ENCODE measurements at regions of chr17 and their contacts with region 1.

Region 1: GRCh38 chr17:55770148-55770870 is 19.5 kb downstream of the PCTP start:
- DNase-seq: no peak
- H3K4me3 Mint-ChIP-seq: no peak overlapping the region
- H3K27ac Mint-ChIP-seq: no peak overlapping the region
- H3K4me1 Mint-ChIP-seq: peaks cover 10% of the 10 kb centered on the region
- H3K27me3 Mint-ChIP-seq: no peaks in the 10 kb centered on the region
- CTCF ChIP-seq: peak; percentile 32

Region 2: DNA sequence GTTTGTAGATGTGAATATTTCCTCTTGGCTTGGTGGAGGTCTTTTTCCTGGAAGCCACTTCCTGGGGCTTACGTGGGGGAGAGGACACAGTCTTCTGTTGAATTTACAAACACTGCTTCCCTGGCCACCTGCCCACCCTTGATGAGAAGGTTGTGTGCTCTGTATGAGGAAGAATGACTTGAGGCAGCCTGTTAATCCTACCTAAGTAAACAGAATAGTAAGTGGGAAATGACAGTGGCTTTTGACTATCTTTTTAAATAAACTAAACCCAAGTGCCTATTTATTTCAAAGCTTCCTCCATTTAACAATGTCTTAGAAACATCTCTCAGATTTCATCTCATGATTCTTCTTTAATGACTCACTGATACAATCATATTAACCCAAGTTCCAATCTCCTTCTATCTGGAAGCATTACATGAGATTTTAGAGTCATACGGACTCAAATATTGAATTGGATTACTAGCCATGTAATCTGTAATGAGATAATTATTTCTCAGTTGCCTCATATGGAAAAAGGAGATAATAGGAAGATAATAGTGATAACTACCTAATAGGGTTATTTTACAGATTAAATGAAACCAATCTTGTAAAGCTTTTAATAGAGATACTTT is 162.5 kb before region 1 on chr17:
- CTCF ChIA-PET with region 1: interaction called, 3 read pairs
- intact Hi-C with region 1: loop called (anchors 2 kb)
- DNase-seq: peak; percentile 37
- H3K4me3 Mint-ChIP-seq: no peak overlapping the region
- H3K27ac Mint-ChIP-seq: no peak overlapping the region
- H3K4me1 Mint-ChIP-seq: no peaks in the 10 kb centered on the region
- H3K27me3 Mint-ChIP-seq: no peaks in the 10 kb centered on the region
- CTCF ChIP-seq: no peak

Region 3: GRCh38 chr17:55717898-55718735 is 52.2 kb before region 1 on chr17:
- CTCF ChIA-PET with region 1: no interaction called
- intact Hi-C with region 1: loop called (anchors 5 kb)
- DNase-seq: peak; percentile 76
- H3K4me3 Mint-ChIP-seq: no peak overlapping the region
- H3K27ac Mint-ChIP-seq: no peak overlapping the region
- H3K4me1 Mint-ChIP-seq: peaks cover 9% of the 10 kb centered on the region
- H3K27me3 Mint-ChIP-seq: peaks cover 9% of the 10 kb centered on the region
- CTCF ChIP-seq: peak; percentile 39

Region 4: DNA sequence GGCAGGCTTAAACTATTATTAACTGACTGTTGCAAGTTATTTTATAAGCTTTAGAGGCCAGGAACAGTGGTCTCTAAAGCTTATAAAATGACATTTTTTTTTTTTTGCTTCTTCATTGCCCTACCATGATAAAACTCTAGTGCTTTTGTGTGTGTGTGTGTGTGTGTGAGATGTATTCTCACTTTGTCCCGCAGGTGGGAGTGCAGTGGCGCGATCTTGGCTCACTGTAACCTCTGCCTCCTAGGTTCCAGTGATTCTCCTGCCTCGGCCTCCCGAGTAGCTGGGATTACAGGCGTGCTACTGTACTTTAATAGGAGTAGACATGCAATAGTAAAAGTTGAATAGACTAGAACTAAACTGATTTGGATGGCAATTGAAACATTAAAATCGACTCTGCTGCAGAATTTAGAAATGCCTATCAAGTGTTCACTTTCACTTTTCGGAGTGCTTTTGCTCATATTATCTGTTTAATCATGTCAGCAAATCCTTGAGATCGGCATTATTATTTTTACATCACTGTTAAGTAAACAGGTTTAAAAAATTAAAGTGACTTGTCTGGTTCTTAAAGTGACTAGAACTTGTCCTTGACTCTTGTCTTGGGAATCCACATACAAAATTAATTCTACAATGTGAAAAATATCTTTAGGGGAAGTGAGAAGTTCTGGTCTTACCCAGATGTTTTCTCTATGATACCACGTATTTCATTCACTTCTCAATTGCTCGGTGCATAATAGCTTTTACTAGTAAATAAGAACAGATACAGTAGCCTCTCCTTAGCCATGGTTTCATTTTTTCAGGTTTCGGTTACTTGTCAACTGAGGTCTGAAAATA is 27.8 kb before region 1 on chr17:
- CTCF ChIA-PET with region 1: interaction called, 6 read pairs
- intact Hi-C with region 1: loop called (anchors 1 kb)
- DNase-seq: peak; percentile 29
- H3K4me3 Mint-ChIP-seq: peak overlapping the region; percentile 24
- H3K27ac Mint-ChIP-seq: peak overlapping the region; percentile 83
- H3K4me1 Mint-ChIP-seq: peaks cover 39% of the 10 kb centered on the region
- H3K27me3 Mint-ChIP-seq: no peaks in the 10 kb centered on the region
- CTCF ChIP-seq: no peak

Region 5: GRCh38 chr17:55757659-55758058 is 12.7 kb before region 1 on chr17:
- CTCF ChIA-PET with region 1: no interaction called
- intact Hi-C with region 1: no loop called
- DNase-seq: no peak
- H3K4me3 Mint-ChIP-seq: no peak overlapping the region
- H3K27ac Mint-ChIP-seq: no peak overlapping the region
- H3K4me1 Mint-ChIP-seq: peaks cover 17% of the 10 kb centered on the region
- H3K27me3 Mint-ChIP-seq: no peaks in the 10 kb centered on the region
- CTCF ChIP-seq: no peak

Region 6: GRCh38 chr17:55825213-55825612 is 54.9 kb after region 1 on chr17:
- CTCF ChIA-PET with region 1: no interaction called
- intact Hi-C with region 1: loop called (anchors 1 kb)
- DNase-seq: peak; percentile 13
- H3K4me3 Mint-ChIP-seq: no peak overlapping the region
- H3K27ac Mint-ChIP-seq: no peak overlapping the region
- H3K4me1 Mint-ChIP-seq: no peaks in the 10 kb centered on the region
- H3K27me3 Mint-ChIP-seq: peaks cover 18% of the 10 kb centered on the region
- CTCF ChIP-seq: no peak

Measured in Calu3 (cell line).